ENCODE measurements at regions of chr15 and their contacts with region 1.

Region 1: DNA sequence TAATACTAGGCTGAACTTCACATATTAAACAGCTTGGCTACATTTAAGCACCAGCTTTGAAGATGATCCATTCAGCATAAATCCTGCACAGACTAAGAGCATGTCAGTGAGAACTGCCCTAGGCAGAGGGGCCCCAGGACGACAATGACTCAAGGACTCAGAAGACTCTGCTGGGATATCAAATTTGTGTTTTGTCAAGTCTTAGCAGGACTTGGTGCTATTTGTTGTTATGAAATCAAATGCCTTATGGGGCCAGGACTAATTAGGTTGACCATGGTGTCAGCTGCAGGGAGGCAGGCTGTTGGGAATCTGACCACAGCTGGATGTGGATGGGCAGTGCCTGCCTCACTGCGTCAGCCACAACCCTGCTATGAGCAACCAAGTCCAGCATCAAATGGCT is 91.8 kb downstream of the RYR3 start:
- DNase-seq: no peak
- H3K4me3 ChIP-seq: no peak overlapping the region
- H3K27ac ChIP-seq: no peak overlapping the region
- H3K4me1 ChIP-seq: no peaks in the 10 kb centered on the region
- H3K27me3 ChIP-seq: no peaks in the 10 kb centered on the region
- CTCF ChIP-seq: no peak
- POLR2A ChIP-seq: no peak

Region 2: DNA sequence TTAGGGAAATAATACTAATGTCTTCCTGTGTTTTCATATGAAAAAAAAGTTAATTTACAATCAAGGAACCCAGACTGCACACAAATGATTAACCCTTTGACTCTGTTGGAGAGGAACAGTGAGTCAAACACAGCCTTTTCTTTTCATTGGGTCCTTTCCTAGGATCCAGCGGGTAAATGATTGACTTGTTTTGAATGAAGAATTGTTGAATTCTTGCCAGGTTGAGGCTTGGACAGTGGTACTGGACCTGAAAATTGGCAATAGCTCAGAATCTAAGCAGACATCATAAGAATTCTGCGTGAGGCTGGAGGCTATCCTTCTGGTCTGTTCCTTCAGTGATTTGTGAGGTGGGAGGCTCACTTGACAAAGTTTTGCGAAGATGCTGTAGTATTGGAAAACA is 51.2 kb after region 1 on chr15:
- intact Hi-C with region 1: loop called (anchors 5 kb)
- DNase-seq: no peak
- H3K4me3 ChIP-seq: no peak overlapping the region
- H3K27ac ChIP-seq: no peak overlapping the region
- H3K4me1 ChIP-seq: no peaks in the 10 kb centered on the region
- H3K27me3 ChIP-seq: no peaks in the 10 kb centered on the region
- CTCF ChIP-seq: no peak
- POLR2A ChIP-seq: no peak